Heart left ventricle (tissue), 16 donors: ENCODE measurements at regions of chr16 and their contacts with region 1.

Region 1: DNA sequence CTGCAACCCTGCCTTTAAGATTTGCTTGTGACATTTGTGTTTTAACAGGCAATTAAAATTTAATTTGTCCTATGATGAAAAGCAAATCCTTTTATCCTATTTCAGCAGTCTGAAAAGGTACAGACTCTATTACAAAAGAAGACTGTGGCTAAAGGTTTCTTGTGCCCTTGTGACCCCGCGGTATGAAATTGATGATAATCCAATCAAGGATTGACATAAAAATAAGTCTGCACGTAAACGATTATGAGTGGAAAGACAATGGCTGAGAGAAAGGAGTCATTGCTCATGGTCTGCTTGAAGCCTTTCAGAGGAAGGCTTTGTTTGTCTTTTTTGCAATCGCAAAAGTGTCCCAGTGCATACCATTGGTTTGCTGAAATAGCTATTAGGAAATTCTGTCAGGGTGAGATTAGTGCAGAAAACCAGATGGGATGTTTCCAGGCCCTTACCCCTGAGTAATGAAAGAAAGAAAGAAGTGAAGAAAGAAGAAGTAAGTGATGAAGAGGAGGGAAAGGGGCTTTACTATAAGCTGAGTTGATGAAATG is 867.8 kb upstream of the CDH8 start:
- DNase-seq: no peak
- ATAC-seq: no peak
- H3K4me3 ChIP-seq: no peak overlapping the region
- H3K27ac ChIP-seq: no peak overlapping the region
- H3K4me1 ChIP-seq: no peaks in the 10 kb centered on the region
- H3K27me3 ChIP-seq: no peaks in the 10 kb centered on the region
- CTCF ChIP-seq: no peak
- POLR2A ChIP-seq: no peak

Region 2: DNA sequence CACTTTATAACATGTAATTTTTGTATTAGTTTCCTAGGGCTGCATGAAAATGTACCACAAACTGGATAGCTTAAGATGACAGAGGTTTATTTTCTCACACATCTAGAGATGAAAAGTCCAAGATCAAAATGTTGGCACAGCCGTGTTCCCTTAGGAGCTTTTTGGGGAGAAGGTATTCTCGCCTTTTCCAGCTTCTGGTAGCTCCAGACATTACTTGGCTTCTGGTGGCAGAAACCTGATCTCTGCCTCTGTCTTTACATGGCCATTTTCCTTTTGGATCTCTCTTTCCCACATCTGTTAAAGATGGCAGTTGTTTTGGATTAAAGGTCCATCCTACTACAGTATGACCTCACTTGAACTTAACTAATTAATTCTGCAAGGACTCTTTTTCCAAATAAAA is 17.9 kb after region 1 on chr16:
- intact Hi-C with region 1: loop called in 1 of 10 experiments (anchors 2 kb)
- DNase-seq: no peak
- ATAC-seq: no peak
- H3K4me3 ChIP-seq: no peak overlapping the region
- H3K27ac ChIP-seq: no peak overlapping the region
- H3K4me1 ChIP-seq: no peaks in the 10 kb centered on the region
- H3K27me3 ChIP-seq: no peaks in the 10 kb centered on the region
- CTCF ChIP-seq: no peak
- POLR2A ChIP-seq: no peak

Region 3: DNA sequence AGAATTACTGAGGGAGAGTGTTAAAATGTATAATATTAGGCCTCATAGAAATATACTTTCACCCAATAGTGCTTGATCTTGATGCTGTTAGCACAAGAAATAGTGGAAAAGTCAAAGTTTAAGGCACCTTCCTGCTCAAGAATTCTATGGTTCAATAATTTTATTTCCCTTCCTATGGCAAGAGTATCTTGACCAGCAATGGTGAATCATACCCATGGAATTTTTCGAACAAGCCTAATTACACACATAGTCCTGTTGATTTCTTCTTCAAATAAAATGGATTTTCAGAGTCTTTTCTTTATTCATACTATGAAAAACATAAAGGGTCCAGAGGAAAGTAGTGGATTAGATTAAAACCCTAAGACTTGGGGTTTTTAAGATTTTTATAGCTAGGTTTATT is 1407.2 kb after region 1 on chr16:
- intact Hi-C with region 1: no loop called
- DNase-seq: no peak
- ATAC-seq: no peak
- H3K4me3 ChIP-seq: no peak overlapping the region
- H3K27ac ChIP-seq: no peak overlapping the region
- H3K4me1 ChIP-seq: peaks cover 0 to 3% (median 0%) of the 10 kb centered on the region in 12 donors
- H3K27me3 ChIP-seq: no peaks in the 10 kb centered on the region
- CTCF ChIP-seq: no peak
- POLR2A ChIP-seq: no peak